ENCODE measurements at regions of chr2 and their contacts with region 1.

Region 1: DNA sequence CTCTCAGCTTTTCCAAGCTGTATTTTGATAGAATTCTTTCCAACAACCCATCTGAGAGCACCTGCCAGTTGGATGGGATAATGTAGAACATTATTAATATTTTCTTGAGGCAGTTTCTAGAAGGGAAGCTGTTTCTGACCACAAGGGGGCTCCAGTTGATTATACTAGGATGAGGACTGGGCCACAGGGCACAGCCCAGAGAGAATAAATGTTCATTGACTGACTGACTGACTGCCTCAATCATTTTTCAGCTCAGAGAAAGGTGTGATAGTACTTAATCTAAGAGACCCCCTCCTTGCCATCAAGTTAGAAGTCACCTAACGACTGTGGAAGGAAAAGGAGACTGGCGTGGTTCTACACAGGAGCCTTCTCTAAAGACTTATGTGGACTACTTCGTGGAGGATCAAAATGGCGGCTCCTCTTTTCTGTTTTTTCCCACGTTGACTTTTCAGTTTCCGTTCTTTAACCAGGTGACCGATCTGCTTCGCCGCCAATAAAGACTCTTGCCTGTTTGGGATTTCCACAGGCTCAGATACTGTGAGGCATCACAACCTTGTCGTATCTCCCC is 31.9 kb upstream of the CREG2 start:
- DNase-seq: peak; percentile 82
- H3K4me3 Mint-ChIP-seq: no peak overlapping the region
- H3K27ac Mint-ChIP-seq: no peak overlapping the region
- H3K4me1 Mint-ChIP-seq: no peaks in the 10 kb centered on the region
- H3K27me3 Mint-ChIP-seq: no peaks in the 10 kb centered on the region

Region 2: GRCh38 chr2:101408925-101409324 is 10.3 kb before region 1 on chr2:
- CTCF ChIA-PET with region 1: interaction called, 17 read pairs
- intact Hi-C with region 1: no loop called
- DNase-seq: no peak
- H3K4me3 Mint-ChIP-seq: no peak overlapping the region
- H3K27ac Mint-ChIP-seq: no peak overlapping the region
- H3K4me1 Mint-ChIP-seq: no peaks in the 10 kb centered on the region
- H3K27me3 Mint-ChIP-seq: no peaks in the 10 kb centered on the region

Region 3: GRCh38 chr2:101509499-101510284 is 90.5 kb after region 1 on chr2:
- CTCF ChIA-PET with region 1: no interaction called
- intact Hi-C with region 1: no loop called
- DNase-seq: no peak
- H3K4me3 Mint-ChIP-seq: no peak overlapping the region
- H3K27ac Mint-ChIP-seq: no peak overlapping the region
- H3K4me1 Mint-ChIP-seq: peaks cover 1% of the 10 kb centered on the region
- H3K27me3 Mint-ChIP-seq: no peaks in the 10 kb centered on the region

Region 4: GRCh38 chr2:101717071-101717845 is 298.1 kb after region 1 on chr2:
- CTCF ChIA-PET with region 1: no interaction called
- intact Hi-C with region 1: no loop called
- DNase-seq: peak; percentile 75
- H3K4me3 Mint-ChIP-seq: peak overlapping the region; percentile 38
- H3K27ac Mint-ChIP-seq: peak overlapping the region; percentile 95
- H3K4me1 Mint-ChIP-seq: peaks cover 92% of the 10 kb centered on the region
- H3K27me3 Mint-ChIP-seq: no peaks in the 10 kb centered on the region

Region 5: GRCh38 chr2:101873543-101873942 is 454.4 kb after region 1 on chr2:
- CTCF ChIA-PET with region 1: interaction called, 6 read pairs
- intact Hi-C with region 1: loop called (anchors 1 kb)
- DNase-seq: no peak
- H3K4me3 Mint-ChIP-seq: no peak overlapping the region
- H3K27ac Mint-ChIP-seq: no peak overlapping the region
- H3K4me1 Mint-ChIP-seq: no peaks in the 10 kb centered on the region
- H3K27me3 Mint-ChIP-seq: no peaks in the 10 kb centered on the region

Measured in activated naive CD4-positive, alpha-beta T cell treated with anti-CD3 and anti-CD28 coated beads for 36 hours (primary cell).